ENCODE measurements at regions of chr7 and their contacts with region 1.

Region 1: DNA sequence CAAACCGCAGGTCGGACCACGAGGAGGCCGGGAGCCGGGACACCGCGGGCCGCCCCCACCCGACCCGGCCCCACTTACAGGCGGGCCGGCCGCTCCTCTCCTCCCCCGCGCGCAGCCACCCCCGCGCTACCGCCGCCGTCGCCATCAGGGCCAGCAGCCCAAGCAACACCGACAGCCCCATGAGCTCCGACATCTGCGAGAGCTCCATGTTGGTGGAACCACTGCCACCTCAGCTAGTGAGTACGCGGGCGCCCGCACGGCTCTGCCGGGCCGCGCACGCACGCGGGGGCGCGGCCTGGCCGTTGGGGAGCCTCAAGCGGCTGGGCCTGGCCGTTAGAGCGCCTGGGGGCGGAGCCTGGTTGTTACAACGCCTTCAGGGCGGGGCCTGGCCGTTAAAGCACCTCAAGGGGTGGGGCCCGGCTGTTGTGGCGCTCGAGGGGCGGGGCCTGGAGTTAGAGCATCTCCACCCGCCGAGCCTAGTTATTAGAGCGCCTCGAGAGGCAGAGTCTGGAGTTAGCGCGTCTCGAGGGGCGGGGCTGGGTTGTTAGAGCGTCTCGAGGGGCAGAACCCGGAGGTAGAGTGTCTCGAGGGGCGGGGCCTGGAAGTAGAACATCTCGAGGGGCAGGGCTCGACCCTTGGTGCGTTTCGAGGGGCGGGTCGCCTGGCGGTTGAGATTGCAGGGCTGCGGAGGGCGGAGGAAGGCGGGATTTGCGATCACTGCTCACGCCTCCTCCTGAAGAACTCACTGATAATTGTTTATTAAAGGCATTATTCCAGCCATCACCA is at the start of gene TBL2:
- DNase-seq: peak; percentile 98
- H3K4me3 Mint-ChIP-seq: peak within 1 kb of the TSS; percentile 93
- H3K27ac Mint-ChIP-seq: peak within 1 kb of the TSS; percentile 96
- H3K4me1 Mint-ChIP-seq: peaks cover 28% of the 10 kb centered on the region
- H3K27me3 Mint-ChIP-seq: no peaks in the 10 kb centered on the region
- total RNA-seq, gene TBL2: 46.5 and 48.2 TPM in 2 replicates

Region 2: GRCh38 chr7:71925663-71926062 is 1652.9 kb before region 1 on chr7:
- intact Hi-C with region 1: no loop called
- DNase-seq: no peak
- H3K4me3 Mint-ChIP-seq: no peak overlapping the region
- H3K27ac Mint-ChIP-seq: no peak overlapping the region
- H3K4me1 Mint-ChIP-seq: no peaks in the 10 kb centered on the region
- H3K27me3 Mint-ChIP-seq: no peaks in the 10 kb centered on the region

Region 3: GRCh38 chr7:73433924-73434700 is 144.4 kb before region 1 on chr7:
- intact Hi-C with region 1: loop called (anchors 1 kb)
- DNase-seq: peak; percentile 2
- H3K4me3 Mint-ChIP-seq: peak overlapping the region; percentile 77
- H3K27ac Mint-ChIP-seq: no peak overlapping the region
- H3K4me1 Mint-ChIP-seq: no peaks in the 10 kb centered on the region
- H3K27me3 Mint-ChIP-seq: peaks cover 7% of the 10 kb centered on the region

Region 4: GRCh38 chr7:73557108-73557396 is 21.5 kb before region 1 on chr7:
- intact Hi-C with region 1: loop called (anchors 1 kb)
- DNase-seq: peak; percentile 92
- H3K4me3 Mint-ChIP-seq: peak overlapping the region; percentile 94
- H3K27ac Mint-ChIP-seq: peak overlapping the region; percentile 79
- H3K4me1 Mint-ChIP-seq: peaks cover 38% of the 10 kb centered on the region
- H3K27me3 Mint-ChIP-seq: peaks cover 8% of the 10 kb centered on the region

Region 5: DNA sequence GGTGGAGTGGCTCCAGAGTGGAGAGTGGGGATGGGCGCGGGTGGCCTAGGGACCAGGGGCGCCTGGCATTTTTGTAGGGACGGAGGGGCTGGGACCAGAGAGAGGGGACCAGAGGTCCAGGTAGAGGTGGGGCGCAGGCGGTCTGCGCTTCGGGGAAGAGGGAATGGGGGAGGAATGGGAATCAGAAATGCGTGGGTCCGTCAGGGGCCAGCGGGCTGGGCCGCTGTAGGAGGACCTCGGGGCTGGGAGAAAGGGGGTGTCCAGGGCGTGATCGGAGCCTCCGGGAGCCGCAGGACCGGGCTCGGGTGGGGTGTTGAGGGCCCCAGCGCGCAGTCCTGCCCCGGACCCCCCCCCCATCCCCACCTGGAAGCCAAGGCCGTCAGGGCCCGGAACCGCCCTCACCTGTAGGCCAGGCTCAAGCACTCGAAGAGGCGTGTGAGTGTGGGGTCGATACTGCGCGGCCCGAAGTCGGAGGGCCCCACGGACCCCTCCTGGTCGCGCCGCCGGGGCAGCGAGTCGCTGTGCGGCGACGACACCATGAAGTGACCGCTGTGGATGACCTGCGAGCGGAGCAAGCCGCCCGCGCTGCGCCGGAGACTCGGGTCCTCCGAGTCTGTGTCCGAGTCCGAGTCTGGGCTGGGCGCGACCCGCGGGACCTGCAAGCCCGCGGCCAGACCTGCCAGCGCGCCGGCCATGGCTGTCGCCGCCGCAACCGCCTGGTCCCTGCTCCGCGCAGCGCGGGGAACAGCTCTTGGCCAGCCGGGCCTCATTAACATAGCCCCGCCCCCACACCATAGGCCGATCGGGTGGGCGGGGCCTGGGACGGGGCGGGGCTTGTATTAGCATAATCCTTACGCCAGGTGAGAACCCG is 45.5 kb after region 1 on chr7 and contains the start of gene MLXIPL:
- intact Hi-C with region 1: loop called (anchors 1 kb)
- DNase-seq: peak; percentile 38
- H3K4me3 Mint-ChIP-seq: no peak within 1 kb of the TSS
- H3K27ac Mint-ChIP-seq: no peak within 1 kb of the TSS
- H3K4me1 Mint-ChIP-seq: no peaks in the 10 kb centered on the region
- H3K27me3 Mint-ChIP-seq: peaks cover 49% of the 10 kb centered on the region
- total RNA-seq, gene MLXIPL: not detected in 2 replicates

Region 6: DNA sequence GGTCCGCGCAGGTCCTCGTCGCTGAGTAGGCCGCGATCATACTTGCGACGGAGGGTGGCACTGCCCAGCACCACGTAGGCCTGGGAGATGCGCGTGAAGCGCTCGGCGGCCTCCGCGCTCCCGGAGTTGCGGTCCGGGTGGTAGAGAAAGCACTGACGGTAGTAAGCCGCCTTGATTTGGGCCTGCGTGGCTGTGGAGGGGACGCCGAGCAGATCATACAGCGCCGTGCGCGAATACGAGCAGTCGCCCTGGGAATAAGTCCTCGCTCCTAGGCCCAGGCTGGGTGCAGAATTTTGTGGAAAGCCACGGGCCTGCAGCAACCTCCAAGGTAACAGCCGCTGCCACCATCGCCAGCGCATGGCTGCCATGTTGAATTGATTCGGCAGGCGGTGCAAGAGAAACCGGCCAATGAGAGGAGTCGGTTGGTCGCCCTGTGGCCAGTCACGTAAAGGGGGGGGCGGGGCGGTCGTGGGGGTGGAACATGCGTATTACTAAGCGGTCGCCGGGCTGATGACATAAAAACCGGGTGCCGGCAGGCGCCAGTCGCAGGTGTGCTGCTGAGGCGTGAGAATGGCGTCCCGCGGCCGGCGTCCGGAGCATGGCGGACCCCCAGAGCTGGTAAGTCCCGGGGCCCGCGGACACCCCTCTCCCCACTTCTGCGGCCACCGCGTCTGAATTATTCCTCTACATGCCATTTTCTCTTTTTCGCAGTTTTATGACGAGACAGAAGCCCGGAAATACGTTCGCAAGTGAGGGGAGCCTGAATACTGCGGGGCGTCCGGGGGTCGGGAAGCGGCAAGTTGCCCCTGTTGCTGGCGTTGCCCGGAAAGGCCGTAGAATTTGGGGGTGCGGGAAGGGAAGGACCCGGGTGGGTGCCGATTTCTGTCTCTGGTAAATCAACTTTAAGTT is 104.8 kb after region 1 on chr7 and contains the starts of genes BUD23 and DNAJC30:
- intact Hi-C with region 1: loop called (anchors 1 kb)
- DNase-seq: peak; percentile 87
- H3K4me3 Mint-ChIP-seq: peak within 1 kb of the TSS; percentile 99
- H3K27ac Mint-ChIP-seq: peak within 1 kb of the TSS; percentile 90
- H3K4me1 Mint-ChIP-seq: peaks cover 26% of the 10 kb centered on the region
- H3K27me3 Mint-ChIP-seq: no peaks in the 10 kb centered on the region
- total RNA-seq, gene BUD23: 128 and 138 TPM in 2 replicates
- total RNA-seq, gene DNAJC30: 11.2 and 11.6 TPM in 2 replicates

Region 7: GRCh38 chr7:74083117-74083876 is 504.8 kb after region 1 on chr7 and contains the start of gene LIMK1:
- intact Hi-C with region 1: loop called (anchors 1 kb)
- DNase-seq: peak; percentile 78
- H3K4me3 Mint-ChIP-seq: peak within 1 kb of the TSS; percentile 88
- H3K27ac Mint-ChIP-seq: peak within 1 kb of the TSS; percentile 89
- H3K4me1 Mint-ChIP-seq: peaks cover 12% of the 10 kb centered on the region
- H3K27me3 Mint-ChIP-seq: peaks cover 2% of the 10 kb centered on the region
- total RNA-seq, gene LIMK1: 24.3 and 25.2 TPM in 2 replicates

Measured in activated T-helper 1 cell treated with anti-CD3 and anti-CD28 coated beads, Interleukin-12 subunit alpha, Interleukin-12 subunit beta, Interleukin-2, Interleukin-4 antibody, amounts not matched to agents 30 ng/mL and 10 ng/mL and 1 ng/mL, durations not matched to agents 14 hours and 24 hours and 36 hours (primary cell).